Sciatic nerve (tissue), 2 donors: ENCODE measurements at regions of chr7 and their contacts with region 1.

Region 1: DNA sequence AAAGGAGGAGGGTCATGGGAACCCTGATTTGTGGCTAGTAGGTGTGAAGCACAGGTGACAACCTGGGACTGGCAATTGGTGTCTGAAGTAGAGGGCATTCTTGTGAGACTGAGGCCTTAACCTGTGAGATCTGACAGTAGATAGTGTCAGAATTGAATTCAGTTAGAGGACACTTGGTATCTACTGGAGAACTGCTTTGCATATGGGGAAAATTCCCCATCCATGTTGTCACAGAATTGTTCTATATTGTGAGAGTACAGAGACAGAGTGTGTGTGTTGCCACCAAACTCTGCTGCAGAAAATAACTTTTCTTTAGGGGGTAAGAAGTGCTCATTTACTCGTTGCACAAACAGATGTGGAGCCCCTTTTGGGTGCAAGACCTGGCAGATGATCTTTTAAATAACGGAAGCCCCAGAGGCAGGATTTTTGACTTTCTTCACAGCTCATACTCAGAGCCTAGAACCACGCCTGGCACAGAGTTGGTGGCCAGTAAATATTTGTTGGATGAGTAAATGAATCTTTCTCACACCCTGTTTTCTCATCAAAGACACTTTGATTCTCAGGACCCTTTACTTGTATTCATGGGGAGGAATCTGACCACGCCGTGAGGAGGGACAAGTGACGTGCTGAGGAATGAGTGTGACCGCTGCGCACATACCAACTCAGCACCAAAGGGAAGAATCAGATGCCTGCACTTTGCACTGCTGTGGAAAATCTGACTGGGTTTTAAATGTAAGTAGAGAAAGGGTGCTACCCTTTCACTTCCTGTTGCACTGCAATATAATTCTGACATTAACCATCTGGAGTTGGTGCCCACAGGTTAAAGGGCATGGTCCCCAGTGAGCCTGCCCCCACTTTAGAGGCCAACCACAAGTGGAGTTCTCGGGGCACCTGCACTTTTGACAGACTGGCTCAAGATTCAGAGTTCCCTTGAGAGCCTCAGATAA is 39.2 kb upstream of the SDHAF3 start:
- DNase-seq: no peak
- ATAC-seq: no peak

Region 2: DNA sequence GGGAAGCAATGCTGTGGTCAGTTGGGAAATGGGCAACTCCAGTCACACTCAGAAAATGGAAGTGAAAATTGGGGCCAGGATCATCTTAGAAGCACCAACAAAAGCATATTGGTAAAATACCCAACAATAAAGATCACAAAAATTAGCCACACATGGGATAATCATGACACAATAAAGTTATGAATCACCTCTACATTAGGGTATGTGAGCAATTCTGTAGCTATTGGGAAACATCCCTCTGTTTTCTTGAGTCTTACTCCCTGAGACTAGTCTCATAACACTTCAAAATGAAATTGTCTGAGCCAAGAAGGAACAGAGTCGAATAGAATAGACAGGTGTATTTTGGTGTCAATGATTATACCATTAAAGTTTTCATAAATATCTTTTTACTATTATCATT is 1127.6 kb before region 1 on chr7:
- intact Hi-C with region 1: loop called (anchors 5 kb)
- DNase-seq: no peak
- ATAC-seq: no peak

Region 3: DNA sequence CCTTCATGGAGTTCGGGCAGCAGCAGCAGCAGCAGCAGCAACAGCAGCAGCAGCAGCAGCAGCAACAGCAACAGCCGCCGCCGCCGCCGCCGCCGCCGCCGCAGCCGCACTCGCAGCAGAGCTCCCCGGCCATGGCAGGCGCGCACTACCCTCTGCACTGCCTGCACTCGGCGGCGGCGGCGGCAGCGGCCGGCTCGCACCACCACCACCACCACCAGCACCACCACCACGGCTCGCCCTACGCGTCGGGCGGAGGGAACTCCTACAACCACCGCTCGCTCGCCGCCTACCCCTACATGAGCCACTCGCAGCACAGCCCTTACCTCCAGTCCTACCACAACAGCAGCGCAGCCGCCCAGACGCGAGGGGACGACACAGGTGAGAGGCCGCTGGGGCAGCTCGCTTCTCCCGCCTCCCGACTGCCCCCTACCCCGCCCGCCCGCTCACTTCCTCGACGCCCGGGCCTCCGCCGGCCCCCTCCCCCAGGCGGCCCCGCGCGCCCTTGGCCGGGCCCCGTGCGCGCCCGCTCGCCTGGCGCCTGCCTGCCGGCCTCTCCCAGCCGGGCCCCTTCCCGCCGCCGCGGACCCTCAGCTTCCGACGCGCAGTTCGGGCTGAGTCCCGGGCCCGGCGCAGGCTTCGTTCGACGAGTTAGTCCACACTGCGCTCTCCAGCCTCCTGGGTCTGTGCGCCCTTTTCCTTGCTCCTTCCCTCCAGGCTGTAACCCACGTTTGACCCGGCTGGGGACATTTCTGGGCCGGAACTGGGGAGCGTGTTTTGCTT is 72.1 kb before region 1 on chr7:
- intact Hi-C with region 1: no loop called
- DNase-seq: no peak
- ATAC-seq: peak; percentile 54